Caco-2 (cell line): ENCODE measurements at regions of chr17 and their contacts with region 1.

Region 1: DNA sequence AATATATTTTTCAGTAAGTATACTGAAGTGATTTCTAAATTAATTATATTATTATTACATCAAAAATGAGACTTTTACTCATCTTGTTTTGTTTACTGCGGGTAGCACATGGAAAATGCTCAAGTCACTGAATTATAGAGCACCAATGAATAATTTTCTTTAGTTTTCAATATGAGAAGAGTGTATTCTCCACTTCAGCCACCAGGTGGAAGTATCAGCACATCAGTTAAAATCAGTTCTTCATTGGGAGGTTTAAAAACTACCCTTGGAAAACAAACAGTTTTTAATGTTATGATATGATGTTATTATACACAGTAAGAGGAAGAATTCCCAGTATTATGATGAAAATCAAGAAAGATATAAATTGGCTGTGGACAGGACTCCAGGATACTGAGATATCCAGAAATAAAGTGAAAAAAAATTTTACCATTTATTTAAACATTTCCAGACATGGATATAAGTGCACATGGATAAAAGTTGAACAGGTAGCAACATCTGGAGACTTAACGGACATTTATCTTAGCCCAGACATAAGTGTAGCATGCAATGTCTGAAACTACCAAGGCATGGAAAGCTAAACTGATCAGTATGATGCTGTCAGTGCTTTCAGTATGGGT is 467.3 kb downstream of the KCNJ2 start:
- DNase-seq: peak in 1 of 2 experiments; percentile 38
- H3K4me3 ChIP-seq: no peak overlapping the region
- H3K4me3 Mint-ChIP-seq: no peak overlapping the region
- H3K27ac Mint-ChIP-seq: no peak overlapping the region
- H3K4me1 ChIP-seq: no peaks in the 10 kb centered on the region
- H3K4me1 Mint-ChIP-seq: no peaks in the 10 kb centered on the region
- H3K27me3 ChIP-seq: no peaks in the 10 kb centered on the region
- H3K27me3 Mint-ChIP-seq: peaks cover 13% of the 10 kb centered on the region
- CTCF ChIP-seq: peak; percentile 67 to 71

Region 2: GRCh38 chr17:70772761-70773160 is 136.1 kb after region 1 on chr17:
- CTCF ChIA-PET with region 1: no interaction called
- POLR2A ChIA-PET with region 1: no interaction called
- intact Hi-C with region 1: loop called (anchors 2 kb)
- DNase-seq: no peak
- H3K4me3 ChIP-seq: no peak overlapping the region
- H3K4me3 Mint-ChIP-seq: no peak overlapping the region
- H3K27ac Mint-ChIP-seq: no peak overlapping the region
- H3K4me1 ChIP-seq: no peaks in the 10 kb centered on the region
- H3K4me1 Mint-ChIP-seq: no peaks in the 10 kb centered on the region
- H3K27me3 ChIP-seq: no peaks in the 10 kb centered on the region
- H3K27me3 Mint-ChIP-seq: no peaks in the 10 kb centered on the region
- CTCF ChIP-seq: no peak

Region 3: GRCh38 chr17:70808596-70808995 is 172.0 kb after region 1 on chr17:
- CTCF ChIA-PET with region 1: no interaction called
- POLR2A ChIA-PET with region 1: no interaction called
- intact Hi-C with region 1: loop called (anchors 2 kb)
- DNase-seq: peak in 1 of 2 experiments; percentile 17
- H3K4me3 ChIP-seq: no peak overlapping the region
- H3K4me3 Mint-ChIP-seq: no peak overlapping the region
- H3K27ac Mint-ChIP-seq: no peak overlapping the region
- H3K4me1 ChIP-seq: no peaks in the 10 kb centered on the region
- H3K4me1 Mint-ChIP-seq: no peaks in the 10 kb centered on the region
- H3K27me3 ChIP-seq: no peaks in the 10 kb centered on the region
- H3K27me3 Mint-ChIP-seq: no peaks in the 10 kb centered on the region
- CTCF ChIP-seq: peak; percentile 46 to 53